Dendritic cell treated with granulocyte-macrophage colony-stimulating factor and Interleukin-4, amounts not matched to agents 40 ng/mL and 50 ng/mL, for 4 days (primary cell): ENCODE measurements at regions of chr16 and their contacts with region 1.

Region 1: DNA sequence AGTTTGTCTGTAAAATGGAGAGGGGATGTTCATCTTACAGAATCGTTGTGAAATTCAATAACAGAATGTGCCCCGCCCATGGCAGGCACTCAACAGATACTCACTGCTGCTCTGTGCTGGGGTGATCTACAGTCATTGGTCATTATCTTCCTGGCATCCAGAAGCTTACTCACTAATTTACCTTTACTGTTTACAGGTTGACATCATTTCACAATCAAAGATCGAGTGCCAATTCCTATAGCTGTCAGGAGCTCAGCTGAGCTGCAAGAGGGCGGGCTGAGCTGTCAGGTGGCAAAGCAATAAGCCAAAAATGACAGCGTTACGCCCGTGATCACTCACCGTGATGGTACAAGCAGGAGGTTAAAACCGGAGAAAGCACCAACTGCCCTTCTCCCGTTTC is 51.2 kb downstream of the LITAF start:
- H3K4me3 Mint-ChIP-seq: no peak overlapping the region
- H3K27ac Mint-ChIP-seq: no peak overlapping the region
- H3K4me1 Mint-ChIP-seq: peaks cover 14% of the 10 kb centered on the region
- H3K27me3 Mint-ChIP-seq: peaks cover 6% of the 10 kb centered on the region

Region 2: GRCh38 chr16:11585460-11586377 is 50.2 kb after region 1 on chr16:
- intact Hi-C with region 1: loop called (anchors 5 kb)
- H3K4me3 Mint-ChIP-seq: peak overlapping the region; percentile 88
- H3K27ac Mint-ChIP-seq: peak overlapping the region; percentile 89
- H3K4me1 Mint-ChIP-seq: peaks cover 69% of the 10 kb centered on the region
- H3K27me3 Mint-ChIP-seq: peaks cover 26% of the 10 kb centered on the region

Region 3: GRCh38 chr16:11639925-11640899 is 104.7 kb after region 1 on chr16:
- intact Hi-C with region 1: loop called (anchors 1 kb)
- H3K4me3 Mint-ChIP-seq: peak overlapping the region; percentile 62
- H3K27ac Mint-ChIP-seq: peak overlapping the region; percentile 95
- H3K4me1 Mint-ChIP-seq: peaks cover 56% of the 10 kb centered on the region
- H3K27me3 Mint-ChIP-seq: peaks cover 26% of the 10 kb centered on the region

Region 4: GRCh38 chr16:11715246-11715947 is 179.9 kb after region 1 on chr16:
- intact Hi-C with region 1: loop called (anchors 1 kb)
- H3K4me3 Mint-ChIP-seq: no peak overlapping the region
- H3K27ac Mint-ChIP-seq: no peak overlapping the region
- H3K4me1 Mint-ChIP-seq: peaks cover 5% of the 10 kb centered on the region
- H3K27me3 Mint-ChIP-seq: no peaks in the 10 kb centered on the region